Activated T-helper 1 cell treated with anti-CD3 and anti-CD28 coated beads, Interleukin-12 subunit alpha, Interleukin-12 subunit beta, Interleukin-2, Interleukin-4 antibody, amounts not matched to agents 30 ng/mL and 10 ng/mL and 1 ng/mL, durations not matched to agents 14 hours and 24 hours and 36 hours (primary cell): ENCODE measurements at regions of chr11 and their contacts with region 1.

Region 1: GRCh38 chr11:35272391-35272902 is 133.5 kb downstream of the CD44 start:
- DNase-seq: peak; percentile 54
- H3K4me3 Mint-ChIP-seq: peak overlapping the region; percentile 3
- H3K27ac Mint-ChIP-seq: peak overlapping the region; percentile 86
- H3K4me1 Mint-ChIP-seq: peaks cover 61% of the 10 kb centered on the region
- H3K27me3 Mint-ChIP-seq: peaks cover 12% of the 10 kb centered on the region

Region 2: GRCh38 chr11:34243726-34244464 is 1028.6 kb before region 1 on chr11:
- intact Hi-C with region 1: loop called (anchors 10 kb)
- DNase-seq: peak; percentile 36
- H3K4me3 Mint-ChIP-seq: peak overlapping the region; percentile 65
- H3K27ac Mint-ChIP-seq: peak overlapping the region; percentile 71
- H3K4me1 Mint-ChIP-seq: peaks cover 94% of the 10 kb centered on the region
- H3K27me3 Mint-ChIP-seq: peaks cover 11% of the 10 kb centered on the region

Region 3: DNA sequence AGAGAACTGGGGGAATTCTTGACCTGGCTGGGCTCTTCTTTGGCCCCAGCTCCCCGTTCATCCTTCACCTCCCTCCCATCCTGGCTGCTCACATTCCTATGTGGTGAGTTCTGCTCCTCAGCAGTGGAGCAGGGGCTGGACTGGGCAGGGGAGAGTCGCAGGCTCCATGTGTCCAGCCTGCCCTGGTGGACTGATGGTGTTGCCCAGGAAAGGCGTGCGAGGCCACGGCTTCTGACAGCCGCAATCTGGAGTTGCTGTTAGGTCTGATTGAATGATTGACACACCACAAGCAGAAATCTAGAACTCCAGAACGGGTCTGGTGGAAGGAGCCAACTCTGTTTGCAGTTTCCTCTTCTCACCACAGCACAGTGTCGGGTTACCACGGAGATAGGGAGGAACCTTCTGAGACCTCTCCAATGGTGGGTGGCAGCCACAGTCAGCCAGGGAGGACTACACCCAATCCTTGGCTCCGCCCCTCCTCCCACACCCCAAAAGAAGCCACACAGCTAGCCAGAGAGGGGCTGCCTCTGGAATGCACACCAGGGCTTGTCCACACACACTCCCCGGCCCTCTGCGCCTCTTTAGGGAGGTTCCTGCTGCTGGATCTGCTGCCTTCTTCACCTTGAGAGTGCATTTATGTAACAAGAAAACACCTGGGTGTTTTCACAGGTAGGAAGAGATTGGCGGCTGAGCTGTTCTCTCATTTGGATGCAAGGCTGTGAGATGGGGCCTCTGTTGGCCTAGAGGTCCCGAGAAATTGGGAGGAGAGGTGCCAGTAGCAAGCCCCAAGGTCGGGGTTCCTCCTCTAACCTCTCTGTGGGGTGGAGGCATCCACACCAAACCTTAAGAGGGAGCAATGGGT is 189.9 kb before region 1 on chr11:
- intact Hi-C with region 1: loop called (anchors 1 kb)
- DNase-seq: peak; percentile 85
- H3K4me3 Mint-ChIP-seq: peak overlapping the region; percentile 56
- H3K27ac Mint-ChIP-seq: peak overlapping the region; percentile 91
- H3K4me1 Mint-ChIP-seq: peaks cover 82% of the 10 kb centered on the region
- H3K27me3 Mint-ChIP-seq: no peaks in the 10 kb centered on the region

Region 4: GRCh38 chr11:35237860-35238715 is 34.4 kb before region 1 on chr11:
- intact Hi-C with region 1: loop called (anchors 1 kb)
- DNase-seq: peak; percentile 48
- H3K4me3 Mint-ChIP-seq: peak overlapping the region; percentile 42
- H3K27ac Mint-ChIP-seq: peak overlapping the region; percentile 36
- H3K4me1 Mint-ChIP-seq: peaks cover 67% of the 10 kb centered on the region
- H3K27me3 Mint-ChIP-seq: no peaks in the 10 kb centered on the region

Region 5: GRCh38 chr11:35288817-35289541 is 16.5 kb after region 1 on chr11:
- intact Hi-C with region 1: loop called (anchors 1 kb)
- DNase-seq: no peak
- H3K4me3 Mint-ChIP-seq: peak overlapping the region; percentile 15
- H3K27ac Mint-ChIP-seq: peak overlapping the region; percentile 65
- H3K4me1 Mint-ChIP-seq: peaks cover 47% of the 10 kb centered on the region
- H3K27me3 Mint-ChIP-seq: peaks cover 8% of the 10 kb centered on the region

Region 6: GRCh38 chr11:35337136-35337918 is 64.9 kb after region 1 on chr11:
- intact Hi-C with region 1: loop called (anchors 1 kb)
- DNase-seq: no peak
- H3K4me3 Mint-ChIP-seq: no peak overlapping the region
- H3K27ac Mint-ChIP-seq: peak overlapping the region; percentile 6
- H3K4me1 Mint-ChIP-seq: peaks cover 40% of the 10 kb centered on the region
- H3K27me3 Mint-ChIP-seq: peaks cover 3% of the 10 kb centered on the region